Activated CD4-positive, alpha-beta memory T cell treated with anti-CD3 and anti-CD28 coated beads, Interleukin-2, amount 10 ng/mL, durations not matched to agents 7 days and 5 days (primary cell): ENCODE measurements at regions of chr20 and their contacts with region 1.

Region 1: DNA sequence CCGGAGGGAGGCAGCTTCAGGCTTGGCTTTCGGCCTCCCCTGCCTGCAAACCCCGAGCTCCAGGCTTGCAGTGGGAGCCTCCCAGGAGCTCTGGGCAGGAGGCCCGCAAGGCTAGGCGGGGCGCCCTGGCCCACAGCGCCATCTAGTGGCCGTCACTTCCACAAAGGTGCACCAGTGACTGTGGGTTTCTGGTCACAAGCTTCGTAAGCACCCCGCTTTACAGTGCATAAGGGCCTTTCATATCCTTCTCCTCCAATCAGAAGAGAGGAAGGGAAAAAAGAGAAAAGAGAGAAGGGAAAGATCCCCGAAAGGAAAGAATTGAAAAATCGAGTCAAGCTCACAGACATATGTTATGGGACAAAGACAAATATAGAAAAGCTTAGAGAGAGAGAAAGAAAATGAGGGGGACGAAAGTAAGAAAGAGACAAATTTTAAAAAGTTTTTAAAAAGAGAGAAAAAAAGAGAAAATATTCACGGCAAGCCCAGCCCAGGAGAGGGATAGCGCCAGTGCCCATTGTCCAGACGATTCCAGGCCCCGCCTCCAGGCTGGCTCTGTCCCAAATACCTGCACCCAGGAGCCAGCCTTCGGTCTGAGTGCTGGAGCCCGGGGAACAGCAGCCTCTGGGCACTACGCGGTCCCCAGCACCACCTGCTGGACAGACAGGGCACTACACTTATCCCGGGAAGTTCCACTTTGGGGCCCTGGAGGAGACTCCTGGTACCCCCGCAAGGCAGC is 207.1 kb downstream of the PREX1 start:
- DNase-seq: peak; percentile 77
- H3K4me3 Mint-ChIP-seq: no peak overlapping the region
- H3K27ac Mint-ChIP-seq: peak overlapping the region; percentile 67
- H3K4me1 Mint-ChIP-seq: peaks cover 21% of the 10 kb centered on the region
- H3K27me3 Mint-ChIP-seq: no peaks in the 10 kb centered on the region

Region 2: DNA sequence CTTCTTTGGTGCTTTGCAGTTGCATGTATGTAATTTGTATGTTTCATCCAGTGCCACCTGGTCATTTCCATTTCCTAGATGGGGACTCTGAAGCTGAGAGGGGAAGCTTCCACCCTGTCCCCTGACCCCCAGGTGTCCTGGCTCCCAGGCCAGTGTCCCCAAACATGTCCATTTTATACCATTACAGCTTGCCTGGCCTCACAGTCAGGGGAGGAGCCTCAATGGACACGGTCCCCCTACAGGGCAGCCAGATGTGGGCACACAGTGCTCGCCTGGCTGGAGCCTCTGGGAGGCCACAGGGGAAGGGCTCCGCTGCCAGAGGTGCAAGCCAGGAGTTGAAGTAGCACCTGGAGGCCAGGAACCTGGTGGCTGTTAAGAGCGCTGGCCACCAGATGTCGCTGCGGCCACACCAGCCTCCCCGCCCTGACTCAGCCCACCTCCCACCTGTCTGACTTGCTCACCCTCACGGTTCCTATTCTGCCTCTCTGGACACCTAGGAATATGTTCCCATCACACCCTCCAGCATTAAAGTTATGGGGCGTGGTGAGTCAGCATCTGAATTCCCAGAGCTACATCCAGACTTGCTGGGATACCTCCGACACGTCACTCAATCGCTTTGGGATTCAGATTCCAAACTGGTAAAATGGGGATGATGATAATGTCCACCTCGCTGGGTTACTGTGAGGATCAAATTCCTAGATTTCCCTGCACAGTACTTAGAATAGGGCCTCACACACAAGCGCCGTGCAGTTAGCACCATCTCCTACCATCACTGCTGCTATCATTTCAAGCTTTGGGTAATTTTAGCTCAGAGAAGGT is 942.8 kb before region 1 on chr20:
- CTCF ChIA-PET with region 1: interaction called, 18 read pairs
- POLR2A ChIA-PET with region 1: no interaction called
- DNase-seq: peak; percentile 62
- H3K4me3 Mint-ChIP-seq: no peak overlapping the region
- H3K27ac Mint-ChIP-seq: no peak overlapping the region
- H3K4me1 Mint-ChIP-seq: no peaks in the 10 kb centered on the region
- H3K27me3 Mint-ChIP-seq: no peaks in the 10 kb centered on the region

Region 3: DNA sequence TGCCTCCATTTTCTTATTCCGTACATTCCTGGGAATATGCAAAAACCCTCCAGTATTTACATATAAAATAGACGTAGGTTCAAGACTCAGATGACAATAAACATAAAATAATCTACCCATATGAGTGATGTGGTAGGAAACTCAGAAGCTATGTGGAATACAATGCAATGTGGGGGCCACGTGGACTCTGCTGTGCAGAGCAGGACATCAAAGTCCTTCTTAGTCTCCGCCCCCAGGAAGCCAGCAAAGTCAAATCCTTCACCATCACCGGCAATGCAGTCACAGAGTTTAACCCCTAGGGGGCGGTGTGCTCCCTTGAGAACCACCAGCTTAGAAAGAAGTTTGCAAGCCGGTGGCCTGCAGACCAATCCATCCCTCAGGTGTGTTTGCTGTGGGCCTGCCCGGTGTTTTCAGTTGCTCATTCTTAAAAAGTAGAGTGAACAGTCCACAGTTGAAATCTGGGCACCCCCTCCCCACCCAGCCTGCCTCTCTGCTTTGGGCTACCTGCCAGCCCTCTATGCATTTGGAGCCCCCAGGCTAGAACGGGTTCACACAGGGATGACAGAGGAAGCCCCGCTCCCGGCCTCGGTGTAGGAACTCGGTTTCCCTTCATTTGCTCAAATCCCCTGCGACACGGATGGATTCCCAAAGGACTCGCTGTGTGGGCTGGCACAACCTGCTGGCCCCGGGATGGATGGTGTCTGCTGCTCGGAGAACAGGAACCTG is 895.3 kb before region 1 on chr20:
- CTCF ChIA-PET with region 1: interaction called, 34 read pairs
- POLR2A ChIA-PET with region 1: no interaction called
- DNase-seq: peak; percentile 89
- H3K4me3 Mint-ChIP-seq: no peak overlapping the region
- H3K27ac Mint-ChIP-seq: peak overlapping the region; percentile 62
- H3K4me1 Mint-ChIP-seq: peaks cover 60% of the 10 kb centered on the region
- H3K27me3 Mint-ChIP-seq: no peaks in the 10 kb centered on the region

Region 4: GRCh38 chr20:48319960-48320584 is 300.6 kb before region 1 on chr20:
- CTCF ChIA-PET with region 1: no interaction called
- POLR2A ChIA-PET with region 1: no interaction called
- DNase-seq: no peak
- H3K4me3 Mint-ChIP-seq: no peak overlapping the region
- H3K27ac Mint-ChIP-seq: no peak overlapping the region
- H3K4me1 Mint-ChIP-seq: no peaks in the 10 kb centered on the region
- H3K27me3 Mint-ChIP-seq: peaks cover 11% of the 10 kb centered on the region

Region 5: GRCh38 chr20:48635433-48636310 is 15.0 kb after region 1 on chr20:
- CTCF ChIA-PET with region 1: interaction called, 16 read pairs
- POLR2A ChIA-PET with region 1: interaction called, 3 read pairs
- DNase-seq: peak; percentile 74
- H3K4me3 Mint-ChIP-seq: no peak overlapping the region
- H3K27ac Mint-ChIP-seq: peak overlapping the region; percentile 63
- H3K4me1 Mint-ChIP-seq: peaks cover 50% of the 10 kb centered on the region
- H3K27me3 Mint-ChIP-seq: no peaks in the 10 kb centered on the region

Region 6: DNA sequence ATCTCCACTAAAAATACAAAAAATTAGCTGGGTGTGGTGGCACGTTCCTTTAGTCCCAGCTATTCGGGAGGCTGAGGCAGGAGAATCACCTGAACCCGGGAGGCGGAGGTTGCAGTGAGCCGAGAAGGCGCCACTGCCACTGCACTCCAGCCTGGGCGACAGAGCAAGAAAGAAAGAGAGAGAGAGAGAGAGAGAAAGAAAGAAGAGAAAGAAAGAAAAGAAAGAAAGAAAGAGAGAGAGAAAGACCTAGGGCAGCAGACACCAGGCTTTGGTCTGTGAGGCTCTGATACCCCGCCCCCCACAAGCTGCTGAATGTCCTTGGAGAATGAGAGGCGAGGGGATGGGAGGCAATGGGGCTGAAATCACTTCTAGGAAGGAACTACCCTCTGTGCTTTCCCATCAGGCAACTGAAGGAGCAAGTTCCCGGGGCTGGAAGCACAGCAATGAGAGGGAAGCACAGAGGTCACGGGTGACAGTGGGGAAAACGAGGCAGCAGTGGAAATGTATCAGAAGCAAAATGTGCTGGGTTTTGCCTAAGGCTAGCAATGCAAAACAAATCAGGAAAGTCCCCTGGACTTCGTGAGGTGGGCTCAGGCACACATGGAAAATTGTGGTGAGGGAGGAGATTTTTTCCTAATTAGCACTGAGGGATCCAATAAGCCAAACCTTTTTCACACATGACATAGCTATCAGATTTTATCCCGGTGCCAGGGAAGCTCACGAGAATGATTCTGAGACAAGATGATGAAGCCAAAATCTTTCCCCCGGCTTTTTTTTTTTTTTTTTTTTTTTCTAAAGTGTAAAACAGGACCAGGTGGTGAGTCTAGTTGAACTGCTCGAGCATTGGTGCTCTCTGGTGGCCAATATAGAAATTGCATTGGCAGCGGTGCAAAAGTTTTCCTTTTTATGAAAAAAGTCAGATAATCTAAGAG is 283.9 kb after region 1 on chr20:
- CTCF ChIA-PET with region 1: interaction called, 19 read pairs
- POLR2A ChIA-PET with region 1: no interaction called
- DNase-seq: peak; percentile 75
- H3K4me3 Mint-ChIP-seq: no peak overlapping the region
- H3K27ac Mint-ChIP-seq: no peak overlapping the region
- H3K4me1 Mint-ChIP-seq: peaks cover 27% of the 10 kb centered on the region
- H3K27me3 Mint-ChIP-seq: peaks cover 4% of the 10 kb centered on the region